BJ (cell line): ENCODE measurements at regions of chr2 and their contacts with region 1.

Region 1: GRCh38 chr2:30711646-30712085 is 95.6 kb downstream of the CAPN13 start:
- DNase-seq: peak; percentile 50
- H3K4me3 ChIP-seq: no peak overlapping the region
- H3K27me3 ChIP-seq: no peaks in the 10 kb centered on the region
- CTCF ChIP-seq: peak; percentile 100

Region 2: DNA sequence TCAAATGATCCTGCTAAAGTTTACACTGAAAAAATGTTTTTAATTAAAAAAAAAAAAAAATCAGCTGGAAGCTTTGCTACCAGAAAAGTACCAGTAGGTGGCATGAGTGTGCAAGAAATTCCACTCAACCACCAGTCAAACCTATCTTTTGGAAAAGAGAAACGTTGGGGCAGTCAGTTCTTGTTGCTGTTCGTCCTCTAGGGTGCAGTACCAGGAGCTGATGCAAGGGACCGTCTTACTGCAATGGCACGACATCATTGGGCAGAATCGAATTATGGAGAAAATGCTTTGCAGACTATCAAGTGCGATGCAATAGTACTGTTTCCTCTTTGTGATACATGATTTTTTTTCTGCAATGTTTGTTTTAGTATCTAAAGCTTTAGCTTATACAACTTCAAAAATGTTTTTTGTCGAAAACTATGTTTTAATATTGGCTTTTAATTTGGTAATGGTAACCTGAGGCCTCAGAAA is 546.6 kb before region 1 on chr2:
- CTCF ChIA-PET with region 1: interaction called, 308 read pairs
- POLR2A ChIA-PET with region 1: interaction called, 8 read pairs
- DNase-seq: peak; percentile 63
- H3K4me3 ChIP-seq: no peak overlapping the region
- H3K27me3 ChIP-seq: no peaks in the 10 kb centered on the region; the same call in 1 of the 2 replicates
- CTCF ChIP-seq: peak; percentile 87

Region 3: DNA sequence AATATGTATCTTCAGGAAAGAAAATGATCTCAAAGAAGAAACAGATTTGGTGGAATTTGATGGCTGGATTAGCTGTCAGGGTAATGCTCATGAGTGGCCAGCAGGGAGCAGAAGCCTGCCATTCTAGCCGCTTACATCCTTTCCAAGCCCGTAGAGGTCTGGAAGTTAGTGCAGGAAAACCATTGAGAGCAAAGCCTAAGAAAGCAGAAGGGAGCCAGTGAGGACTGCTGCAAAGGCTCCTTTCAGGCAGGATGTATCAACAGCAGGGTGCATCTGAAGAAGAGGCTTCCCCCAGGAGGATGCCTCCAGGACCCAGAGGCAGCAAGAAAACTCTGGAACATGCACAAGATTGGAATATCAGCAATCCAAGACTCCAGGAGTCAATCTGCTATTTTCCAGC is 503.2 kb before region 1 on chr2:
- CTCF ChIA-PET with region 1: interaction called, 365 read pairs
- POLR2A ChIA-PET with region 1: no interaction called
- DNase-seq: no peak
- H3K4me3 ChIP-seq: no peak overlapping the region
- H3K27me3 ChIP-seq: no peaks in the 10 kb centered on the region; the same call in 1 of the 2 replicates
- CTCF ChIP-seq: peak; percentile 89

Region 4: GRCh38 chr2:30239308-30239985 is 472.2 kb before region 1 on chr2:
- CTCF ChIA-PET with region 1: interaction called, 11 read pairs
- POLR2A ChIA-PET with region 1: no interaction called
- DNase-seq: no peak
- H3K4me3 ChIP-seq: no peak overlapping the region
- H3K27me3 ChIP-seq: no peaks in the 10 kb centered on the region
- CTCF ChIP-seq: peak; percentile 93

Region 5: DNA sequence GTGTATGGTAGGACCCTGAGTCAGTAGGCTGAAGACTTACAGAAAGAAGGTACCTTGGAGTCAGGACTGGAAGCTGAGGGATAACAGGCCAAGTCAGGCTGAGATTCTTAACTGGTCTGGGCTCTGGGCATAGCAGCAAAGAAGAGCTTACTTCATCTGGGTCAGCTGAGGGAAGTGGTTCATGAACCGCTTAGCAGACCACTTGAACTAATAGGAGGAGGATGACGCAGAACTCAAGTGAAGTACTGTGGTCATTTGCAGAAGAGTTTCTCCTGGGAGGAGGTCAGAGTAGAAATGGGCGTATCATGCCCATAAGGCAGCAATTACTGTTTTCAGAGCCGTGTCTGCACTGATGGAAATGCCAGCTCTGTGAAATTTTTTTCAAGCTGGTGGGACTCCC is 100.1 kb before region 1 on chr2:
- CTCF ChIA-PET with region 1: no interaction called
- POLR2A ChIA-PET with region 1: no interaction called
- DNase-seq: peak; percentile 16
- H3K4me3 ChIP-seq: no peak overlapping the region
- H3K27me3 ChIP-seq: no peaks in the 10 kb centered on the region
- CTCF ChIP-seq: no peak

Region 6: DNA sequence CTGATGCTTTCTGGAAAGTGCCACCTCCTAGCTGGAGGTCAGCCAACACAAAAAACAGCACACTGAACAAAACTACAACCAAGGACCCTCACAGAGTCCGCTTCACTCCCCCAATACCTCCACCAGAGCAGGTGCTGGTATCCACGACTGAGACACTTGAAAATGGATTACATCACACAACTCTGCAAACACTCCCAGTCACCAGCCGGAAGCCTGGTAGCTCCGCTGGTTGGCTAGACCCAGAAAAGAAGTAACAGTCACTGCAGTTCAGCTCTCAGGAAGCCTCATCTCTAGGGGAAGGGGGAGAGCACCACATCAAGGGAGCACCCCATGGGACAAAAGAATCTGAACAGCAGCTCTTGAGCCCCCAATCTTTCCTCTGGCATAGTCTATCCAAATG is 89.2 kb before region 1 on chr2:
- CTCF ChIA-PET with region 1: no interaction called
- POLR2A ChIA-PET with region 1: no interaction called
- DNase-seq: no peak
- H3K4me3 ChIP-seq: no peak overlapping the region
- H3K27me3 ChIP-seq: no peaks in the 10 kb centered on the region
- CTCF ChIP-seq: no peak

Region 7: GRCh38 chr2:30721668-30722647 is 10.3 kb after region 1 on chr2:
- CTCF ChIA-PET with region 1: interaction called, 23 read pairs
- POLR2A ChIA-PET with region 1: no interaction called
- DNase-seq: no peak
- H3K4me3 ChIP-seq: no peak overlapping the region
- H3K27me3 ChIP-seq: peaks cover 2% of the 10 kb centered on the region; the same call in 1 of the 2 replicates
- CTCF ChIP-seq: no peak

Region 8: DNA sequence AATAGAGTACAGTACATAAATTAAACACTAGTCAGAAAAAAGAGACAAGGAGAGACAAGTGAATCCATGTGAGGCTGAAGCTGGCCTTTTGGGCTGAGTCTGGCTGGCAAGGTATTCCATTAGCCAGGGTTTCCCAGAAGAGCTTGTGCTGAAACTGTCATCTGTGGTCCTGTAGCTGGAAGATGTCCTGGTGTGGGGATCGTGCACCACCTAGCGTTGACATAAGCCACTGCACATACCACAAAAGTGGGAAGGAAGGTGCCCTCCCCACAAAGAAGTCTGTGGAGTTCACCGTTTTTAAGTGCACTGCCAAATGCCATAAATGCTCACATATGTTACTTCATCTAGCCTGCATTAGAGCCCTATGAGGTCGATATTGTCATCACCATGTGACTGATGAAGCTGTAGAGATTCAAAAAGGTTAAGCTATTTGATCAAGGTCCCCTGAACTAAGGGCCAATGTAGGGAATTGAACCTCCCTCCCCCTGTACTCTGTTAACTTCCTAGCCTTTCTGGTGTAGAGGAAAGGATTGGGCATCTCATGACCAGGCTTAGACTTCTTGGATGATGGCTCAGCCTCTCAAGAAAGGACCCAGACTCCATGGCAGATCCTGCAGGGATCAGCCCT is 458.5 kb after region 1 on chr2:
- CTCF ChIA-PET with region 1: interaction called, 100 read pairs
- POLR2A ChIA-PET with region 1: no interaction called
- DNase-seq: peak; percentile 4
- H3K4me3 ChIP-seq: no peak overlapping the region
- H3K27me3 ChIP-seq: 0 out of 2 replicates have a peak, but pooled peaks cover 2% of the 10 kb centered on the region
- CTCF ChIP-seq: peak; percentile 93